ENCODE measurements at regions of chr6 and their contacts with region 1.

Region 1: GRCh38 chr6:158231551-158232315 is 63.6 kb downstream of the GTF2H5 start:
- DNase-seq: peak; percentile 84
- H3K4me3 ChIP-seq: peak overlapping the region; percentile 58 to 90 (median 73)
- H3K27ac ChIP-seq: peak overlapping the region; percentile 87 to 89 (median 88)
- H3K4me1 ChIP-seq: peaks cover 0 to 24% (median 11%) of the 10 kb centered on the region in 4 donors
- H3K27me3 ChIP-seq: no peaks in the 10 kb centered on the region
- CTCF ChIP-seq: no peak
- EP300 ChIP-seq: no peak
- POLR2A ChIP-seq: no peak

Region 2: GRCh38 chr6:158283304-158283980 is 51.7 kb after region 1 on chr6:
- intact Hi-C with region 1: loop called (anchors 2 kb)
- DNase-seq: no peak
- H3K4me3 ChIP-seq: no peak overlapping the region
- H3K27ac ChIP-seq: peak overlapping the region; percentile 29 to 77 (median 62)
- H3K4me1 ChIP-seq: peaks cover 0 to 52% (median 34%) of the 10 kb centered on the region in 4 donors
- H3K27me3 ChIP-seq: no peaks in the 10 kb centered on the region
- CTCF ChIP-seq: no peak
- EP300 ChIP-seq: no peak
- POLR2A ChIP-seq: no peak

Region 3: GRCh38 chr6:158559895-158560835 is 328.4 kb after region 1 on chr6 and contains the start of gene TMEM181:
- intact Hi-C with region 1: loop called (anchors 2 kb)
- DNase-seq: peak; percentile 90
- H3K4me3 ChIP-seq: peak within 1 kb of the TSS; percentile 75 to 98 (median 88)
- H3K27ac ChIP-seq: peak within 1 kb of the TSS; percentile 88 to 98 (median 93)
- H3K4me1 ChIP-seq: peaks cover 0 to 28% (median 21%) of the 10 kb centered on the region in 4 donors
- H3K27me3 ChIP-seq: no peaks in the 10 kb centered on the region
- CTCF ChIP-seq: no peak
- EP300 ChIP-seq: no peak
- POLR2A ChIP-seq: no peak
- total RNA-seq, gene TMEM181: 20.8 to 24.7 (median 22.9) TPM